CD4-positive, alpha-beta T cell (primary cell): ENCODE measurements at regions of chr12 and their contacts with region 1.

Region 1: GRCh38 chr12:96578526-96579125 is 89.2 kb downstream of the CFAP54 start:
- DNase-seq: peak in 4 of 14 experiments; percentile 3 to 75 (median 72)
- ATAC-seq: peak; percentile 84
- H3K4me3 ChIP-seq: no peak overlapping the region
- H3K4me3 Mint-ChIP-seq: no peak overlapping the region
- H3K27ac ChIP-seq: no peak overlapping the region
- H3K27ac Mint-ChIP-seq: no peak overlapping the region
- H3K4me1 ChIP-seq: no peaks in the 10 kb centered on the region
- H3K4me1 Mint-ChIP-seq: no peaks in the 10 kb centered on the region
- H3K27me3 ChIP-seq: no peaks in the 10 kb centered on the region
- H3K27me3 Mint-ChIP-seq: peaks cover 10% of the 10 kb centered on the region
- CTCF ChIP-seq: peak; percentile 72

Region 2: DNA sequence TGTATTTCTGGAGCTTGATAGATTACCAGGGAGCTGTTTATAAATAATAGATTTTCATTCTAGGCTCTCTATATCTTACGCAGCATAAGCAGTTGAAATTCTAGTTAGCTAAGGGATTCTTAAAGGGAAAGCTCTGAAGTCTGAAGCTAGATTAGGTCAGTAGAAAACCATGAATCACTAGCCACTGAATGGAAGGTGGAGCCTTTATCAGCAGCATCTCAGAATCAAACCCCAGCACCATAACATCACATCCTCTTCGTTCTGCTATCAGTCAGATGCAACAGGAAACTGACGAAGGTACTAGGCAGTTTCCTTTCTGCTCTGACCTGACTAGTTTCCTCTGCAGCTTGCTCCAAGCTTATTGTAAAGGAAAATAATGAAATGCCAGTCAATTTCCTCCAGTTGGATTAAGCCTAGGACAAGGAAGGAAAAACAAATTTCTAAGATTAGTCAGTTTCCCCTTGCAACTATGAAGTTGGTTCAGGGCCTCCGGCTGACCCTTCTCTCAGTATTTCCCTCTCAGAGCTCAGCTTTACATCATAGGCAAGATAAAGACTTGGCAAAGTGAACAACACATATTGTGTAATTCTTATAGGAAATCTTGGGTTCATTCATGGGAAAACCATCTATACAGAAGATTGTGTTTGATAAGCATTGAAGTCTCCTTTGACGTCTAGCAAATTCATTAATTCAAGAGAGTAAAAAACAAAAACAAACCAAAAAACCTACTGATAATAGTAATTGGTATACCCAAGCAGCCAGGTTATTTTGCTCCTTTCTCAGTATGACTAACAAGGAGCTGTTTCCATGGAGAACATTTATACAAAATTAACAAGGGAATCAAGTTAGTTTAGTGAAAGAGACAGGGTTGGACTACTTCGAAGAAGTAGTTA is 132.7 kb before region 1 on chr12:
- CTCF ChIA-PET with region 1: no interaction called
- POLR2A ChIA-PET with region 1: no interaction called
- intact Hi-C with region 1: no loop called
- DNase-seq: peak in 13 of 14 experiments; percentile 12 to 94 (median 44)
- ATAC-seq: peak; percentile 94
- H3K4me3 ChIP-seq: no peak overlapping the region
- H3K4me3 Mint-ChIP-seq: peak overlapping the region; percentile 55
- H3K27ac ChIP-seq: peak overlapping the region; percentile 74 to 92
- H3K27ac Mint-ChIP-seq: peak overlapping the region; percentile 98
- H3K4me1 ChIP-seq: peaks cover 32% of the 10 kb centered on the region
- H3K4me1 Mint-ChIP-seq: peaks cover 42% of the 10 kb centered on the region
- H3K27me3 ChIP-seq: no peaks in the 10 kb centered on the region
- H3K27me3 Mint-ChIP-seq: no peaks in the 10 kb centered on the region
- CTCF ChIP-seq: no peak

Region 3: DNA sequence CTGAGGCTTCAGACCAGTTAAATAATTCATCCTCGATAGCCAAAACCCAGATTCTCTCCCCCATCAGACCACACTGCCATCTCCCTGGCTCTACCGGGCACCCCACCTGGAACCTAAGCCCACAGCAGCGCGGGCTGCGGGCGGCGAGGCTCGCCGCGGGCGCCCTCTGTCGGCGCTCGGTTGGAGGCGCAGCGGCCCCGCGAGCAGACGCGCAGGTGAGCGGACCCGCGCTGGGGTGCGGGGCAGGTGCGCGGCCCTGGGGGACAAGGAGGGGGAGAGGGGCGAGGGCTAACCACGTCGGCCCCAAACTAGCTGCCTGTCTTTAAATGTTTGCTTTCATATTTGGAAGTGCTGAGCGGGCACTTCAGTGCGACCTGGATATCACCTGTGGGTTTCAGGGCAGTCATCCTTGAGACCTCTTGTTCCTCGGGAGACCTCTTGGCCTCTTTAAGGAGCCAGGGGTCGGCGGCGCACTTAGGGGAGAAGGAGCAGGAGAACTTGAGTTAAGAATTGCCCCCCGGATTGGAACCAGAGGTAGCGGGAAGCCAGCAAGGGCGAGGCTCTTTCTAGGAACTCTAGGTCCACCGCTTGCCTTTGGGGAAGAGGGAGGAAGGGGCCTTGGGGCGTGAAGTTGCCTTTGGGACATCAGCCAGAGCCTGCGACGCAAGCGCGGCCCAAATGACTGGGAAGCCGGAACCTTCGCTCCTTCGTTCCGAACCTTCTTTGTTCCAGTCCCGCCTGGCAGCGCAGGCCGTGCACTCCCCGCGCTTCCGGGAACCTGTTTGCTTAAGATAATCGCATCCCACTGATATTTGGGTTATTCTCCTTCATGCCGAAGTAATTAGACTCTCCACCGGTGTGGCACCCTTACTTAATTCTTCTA is 407.1 kb after region 1 on chr12:
- CTCF ChIA-PET with region 1: no interaction called
- POLR2A ChIA-PET with region 1: no interaction called
- intact Hi-C with region 1: loop called (anchors 1 to 2 kb)
- DNase-seq: peak in 13 of 14 experiments; percentile 5 to 73 (median 36)
- ATAC-seq: peak; percentile 92
- H3K4me3 ChIP-seq: peak overlapping the region; percentile 60
- H3K4me3 Mint-ChIP-seq: peak overlapping the region; percentile 80
- H3K27ac ChIP-seq: no peak overlapping the region
- H3K27ac Mint-ChIP-seq: no peak overlapping the region
- H3K4me1 ChIP-seq: peaks cover 11% of the 10 kb centered on the region
- H3K4me1 Mint-ChIP-seq: peaks cover 9% of the 10 kb centered on the region
- H3K27me3 ChIP-seq: peaks cover 0 to 5% of the 10 kb centered on the region in 2 experiments
- H3K27me3 Mint-ChIP-seq: peaks cover 41% of the 10 kb centered on the region
- CTCF ChIP-seq: peak; percentile 88

Region 4: GRCh38 chr12:97308576-97309198 is 730.1 kb after region 1 on chr12:
- CTCF ChIA-PET with region 1: interaction called, 7 read pairs
- POLR2A ChIA-PET with region 1: interaction called, 3 read pairs
- intact Hi-C with region 1: loop called (anchors 1 kb)
- DNase-seq: peak in 3 of 14 experiments; percentile 57 to 73 (median 73)
- ATAC-seq: peak; percentile 48
- H3K4me3 ChIP-seq: no peak overlapping the region
- H3K4me3 Mint-ChIP-seq: no peak overlapping the region
- H3K27ac ChIP-seq: no peak overlapping the region
- H3K27ac Mint-ChIP-seq: no peak overlapping the region
- H3K4me1 ChIP-seq: no peaks in the 10 kb centered on the region
- H3K4me1 Mint-ChIP-seq: no peaks in the 10 kb centered on the region
- H3K27me3 ChIP-seq: peaks cover 0 to 4% of the 10 kb centered on the region in 2 experiments
- H3K27me3 Mint-ChIP-seq: peaks cover 6% of the 10 kb centered on the region
- CTCF ChIP-seq: peak; percentile 93

Region 5: DNA sequence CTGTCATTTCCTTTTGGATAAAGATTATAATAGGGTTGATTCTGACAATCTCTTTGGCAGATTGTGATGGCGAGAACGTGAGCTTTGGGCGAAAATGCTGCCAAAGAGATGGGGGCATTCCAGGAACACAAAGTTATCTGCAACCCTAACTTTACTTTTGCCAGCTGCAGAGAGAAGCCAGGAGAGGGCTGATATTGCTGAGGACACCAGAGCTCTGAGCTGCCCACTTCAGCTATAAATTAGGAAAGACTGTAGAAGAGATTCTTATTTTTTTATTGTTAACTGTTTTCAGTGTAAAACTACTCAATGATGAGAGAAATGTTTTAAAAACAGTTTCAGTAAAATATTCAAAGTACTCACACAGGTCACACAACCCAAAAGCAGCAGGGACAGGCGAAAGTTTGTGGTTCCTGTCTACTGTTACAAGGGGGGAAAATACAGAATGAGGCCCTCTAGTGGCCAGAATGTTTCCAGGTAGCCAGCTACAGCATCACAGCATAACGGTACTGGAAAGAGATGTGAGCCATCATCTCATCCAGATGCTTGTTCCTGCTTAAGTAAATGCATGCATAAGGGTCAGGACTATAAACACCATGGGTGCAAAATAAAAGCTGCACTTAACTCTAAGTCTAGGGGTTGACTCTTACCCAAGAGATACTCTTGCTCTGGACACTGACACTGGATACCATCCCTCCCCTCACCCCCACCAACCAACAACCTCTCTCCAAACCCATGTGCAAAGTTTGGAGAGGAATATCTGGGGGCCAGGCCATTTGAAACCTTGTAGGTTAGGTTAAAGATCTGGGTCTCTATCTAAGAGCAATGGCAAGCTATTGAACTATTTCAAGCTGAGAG is 1382.4 kb after region 1 on chr12:
- CTCF ChIA-PET with region 1: no interaction called
- POLR2A ChIA-PET with region 1: no interaction called
- intact Hi-C with region 1: loop called in 1 of 2 experiments (anchors 5 kb)
- DNase-seq: peak in 5 of 14 experiments; percentile 4 to 27 (median 9)
- ATAC-seq: no peak
- H3K4me3 ChIP-seq: no peak overlapping the region
- H3K4me3 Mint-ChIP-seq: no peak overlapping the region
- H3K27ac ChIP-seq: no peak overlapping the region
- H3K27ac Mint-ChIP-seq: no peak overlapping the region
- H3K4me1 ChIP-seq: no peaks in the 10 kb centered on the region
- H3K4me1 Mint-ChIP-seq: no peaks in the 10 kb centered on the region
- H3K27me3 ChIP-seq: no peaks in the 10 kb centered on the region
- H3K27me3 Mint-ChIP-seq: no peaks in the 10 kb centered on the region
- CTCF ChIP-seq: peak; percentile 31

Region 6: DNA sequence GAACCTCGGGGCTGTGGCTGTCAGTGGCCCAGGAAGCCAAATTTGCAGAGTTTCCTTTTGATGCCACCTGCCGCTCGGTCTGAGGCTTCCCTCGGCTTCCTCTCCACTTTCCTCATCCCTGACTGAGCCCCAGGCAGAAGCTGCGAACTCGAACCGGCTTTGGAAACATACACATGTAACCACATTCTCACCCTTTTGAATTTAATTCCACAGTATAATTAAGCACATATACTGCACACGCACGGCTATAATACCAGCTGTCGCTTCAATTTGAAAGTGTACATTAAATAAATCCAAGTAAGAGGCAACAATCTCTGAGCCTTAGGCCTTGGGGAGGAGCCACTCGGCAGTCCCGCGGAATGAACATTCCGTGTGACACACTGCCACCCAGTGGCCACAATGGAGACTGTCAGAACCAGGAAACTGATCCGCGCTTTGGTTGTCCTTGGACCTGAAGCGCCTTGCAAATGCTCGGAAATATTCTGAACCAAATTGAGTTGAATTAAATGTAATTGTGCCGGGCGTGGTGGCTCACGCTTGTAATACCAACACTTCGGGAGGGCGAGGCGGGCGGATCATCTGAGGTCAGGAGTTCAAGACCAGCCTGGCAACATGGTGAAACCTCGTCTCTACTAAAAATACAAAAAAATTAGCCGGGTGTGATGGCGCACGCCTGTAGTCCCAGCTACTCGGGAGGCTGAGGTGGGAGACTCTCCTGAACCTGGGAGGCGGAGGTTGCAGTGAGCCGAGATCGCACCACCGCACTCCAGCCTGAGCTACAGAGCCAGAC is 1818.9 kb after region 1 on chr12:
- CTCF ChIA-PET with region 1: no interaction called
- POLR2A ChIA-PET with region 1: no interaction called
- intact Hi-C with region 1: loop called (anchors 1 to 5 kb)
- DNase-seq: peak; percentile 67 to 89 (median 76)
- ATAC-seq: peak; percentile 96
- H3K4me3 ChIP-seq: peak overlapping the region; percentile 53
- H3K4me3 Mint-ChIP-seq: peak overlapping the region; percentile 75
- H3K27ac ChIP-seq: peak overlapping the region in 1 of 2 donors; percentile 37
- H3K27ac Mint-ChIP-seq: peak overlapping the region; percentile 16
- H3K4me1 ChIP-seq: peaks cover 23% of the 10 kb centered on the region
- H3K4me1 Mint-ChIP-seq: peaks cover 28% of the 10 kb centered on the region
- H3K27me3 ChIP-seq: no peaks in the 10 kb centered on the region
- H3K27me3 Mint-ChIP-seq: no peaks in the 10 kb centered on the region
- CTCF ChIP-seq: peak; percentile 82

Region 7: DNA sequence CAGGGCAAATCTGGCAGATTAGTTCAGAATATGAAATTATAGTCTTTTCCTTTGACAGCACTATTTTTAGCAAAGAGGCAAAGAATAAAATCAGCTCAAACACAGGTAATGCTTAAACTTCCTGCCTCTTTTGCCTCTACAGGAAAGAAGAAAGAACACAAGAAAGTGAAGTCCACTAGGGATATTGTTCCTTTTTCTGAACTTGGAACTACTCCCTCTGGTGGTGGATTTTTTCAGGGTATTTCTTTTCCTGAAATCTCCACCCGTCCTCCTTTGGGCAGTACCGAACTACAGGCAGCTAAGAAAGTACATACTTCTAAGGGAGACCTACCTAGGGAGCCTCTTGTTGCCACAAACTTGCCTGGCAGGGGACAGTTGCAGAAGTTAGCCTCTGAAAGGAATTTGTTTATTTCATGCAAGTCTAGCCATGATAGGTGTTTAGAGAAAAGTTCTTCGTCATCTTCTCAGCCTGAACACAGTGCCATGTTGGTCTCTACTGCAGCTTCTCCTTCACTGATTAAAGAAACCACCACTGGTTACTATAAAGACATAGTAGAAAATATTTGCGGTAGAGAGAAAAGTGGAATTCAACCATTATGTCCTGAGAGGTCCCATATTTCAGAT is 1954.2 kb after region 1 on chr12:
- CTCF ChIA-PET with region 1: no interaction called
- POLR2A ChIA-PET with region 1: no interaction called
- intact Hi-C with region 1: loop called in 1 of 2 experiments (anchors 5 kb)
- DNase-seq: peak in 3 of 14 experiments; percentile 60 to 72 (median 70)
- ATAC-seq: peak; percentile 60
- H3K4me3 ChIP-seq: no peak overlapping the region
- H3K4me3 Mint-ChIP-seq: no peak overlapping the region
- H3K27ac ChIP-seq: no peak overlapping the region
- H3K27ac Mint-ChIP-seq: peak overlapping the region; percentile 15
- H3K4me1 ChIP-seq: no peaks in the 10 kb centered on the region
- H3K4me1 Mint-ChIP-seq: peaks cover 22% of the 10 kb centered on the region
- H3K27me3 ChIP-seq: no peaks in the 10 kb centered on the region
- H3K27me3 Mint-ChIP-seq: no peaks in the 10 kb centered on the region
- CTCF ChIP-seq: peak; percentile 75